Common myeloid progenitor, CD34-positive (primary cell): ENCODE measurements at regions of chr19 and their contacts with region 1.

Region 1: DNA sequence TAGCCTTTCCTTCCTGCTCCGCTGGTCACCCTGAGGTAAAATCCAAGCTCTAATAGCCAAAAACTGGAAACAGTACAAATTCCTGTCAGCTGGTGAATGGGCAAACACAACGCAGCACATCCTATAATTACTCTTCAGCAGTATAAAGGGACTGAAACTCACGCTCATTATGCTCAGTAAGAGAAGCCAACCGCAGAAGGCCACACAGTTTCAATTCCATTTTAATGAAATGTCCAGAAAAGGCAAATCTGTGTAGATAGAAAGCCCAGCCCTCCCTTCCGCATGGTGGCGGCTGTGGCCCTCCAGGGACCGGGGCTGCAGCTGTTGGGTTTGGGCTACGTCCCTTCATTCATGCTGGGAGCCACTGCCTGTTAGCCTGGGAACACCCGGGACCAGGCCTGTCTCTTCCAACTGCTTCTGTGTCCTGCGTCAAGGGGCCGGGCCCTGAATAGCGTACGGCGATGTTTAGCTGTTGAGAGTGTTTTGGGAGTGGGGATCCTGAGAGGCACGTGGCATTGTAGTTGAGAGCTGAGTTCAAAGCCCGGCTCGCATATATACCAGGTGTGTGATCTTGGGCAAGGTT is 23.5 kb downstream of the NKPD1 start:
- DNase-seq: no peak
- H3K4me3 ChIP-seq: no peak overlapping the region
- H3K27ac ChIP-seq: no peak overlapping the region
- H3K4me1 ChIP-seq: peaks cover 0 to 6% (median 0%) of the 10 kb centered on the region in 4 experiments
- H3K27me3 ChIP-seq: no peaks in the 10 kb centered on the region

Region 2: DNA sequence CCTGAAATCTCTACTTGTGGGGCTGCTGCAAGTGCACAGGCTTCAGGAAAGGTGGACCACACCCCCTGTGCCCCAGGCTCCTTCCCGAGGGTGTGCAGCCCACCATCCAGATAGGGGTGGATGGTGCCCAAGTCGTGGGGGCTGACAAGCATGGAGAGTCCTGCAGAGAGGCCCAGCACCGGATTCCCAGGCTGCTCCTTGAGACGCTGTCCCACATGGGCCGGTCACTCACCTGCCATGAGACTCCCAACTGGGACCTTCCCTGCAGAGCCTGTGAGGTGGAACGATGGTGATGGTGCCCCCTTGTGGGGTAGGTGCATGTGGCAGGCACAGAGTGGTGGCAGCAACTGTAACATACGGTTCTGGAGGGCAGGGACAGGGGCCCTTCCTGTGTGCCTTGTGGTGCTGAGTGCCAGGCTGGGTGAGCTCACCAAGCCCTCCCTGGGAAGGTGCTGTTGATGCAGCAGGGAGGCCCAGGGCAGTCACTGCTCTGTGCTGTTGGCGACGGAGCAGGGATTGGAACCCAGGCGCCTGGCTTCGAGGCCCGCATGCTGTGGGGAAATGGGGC is 11.3 kb before region 1 on chr19:
- CTCF ChIA-PET with region 1: interaction called, 11 read pairs
- POLR2A ChIA-PET with region 1: no interaction called
- DNase-seq: peak; percentile 59 to 79 (median 72)
- H3K4me3 ChIP-seq: no peak overlapping the region
- H3K27ac ChIP-seq: no peak overlapping the region
- H3K4me1 ChIP-seq: peaks cover 0 to 25% (median 22%) of the 10 kb centered on the region in 4 experiments
- H3K27me3 ChIP-seq: no peaks in the 10 kb centered on the region

Region 3: GRCh38 chr19:45195764-45196163 is 58.5 kb after region 1 on chr19:
- CTCF ChIA-PET with region 1: no interaction called
- POLR2A ChIA-PET with region 1: no interaction called
- DNase-seq: no peak
- H3K4me3 ChIP-seq: no peak overlapping the region
- H3K27ac ChIP-seq: no peak overlapping the region
- H3K4me1 ChIP-seq: no peaks in the 10 kb centered on the region
- H3K27me3 ChIP-seq: peaks cover 0 to 3% (median 0%) of the 10 kb centered on the region in 5 experiments